PC-3 (cell line): ENCODE measurements at regions of chr10 and their contacts with region 1.

Region 1: DNA sequence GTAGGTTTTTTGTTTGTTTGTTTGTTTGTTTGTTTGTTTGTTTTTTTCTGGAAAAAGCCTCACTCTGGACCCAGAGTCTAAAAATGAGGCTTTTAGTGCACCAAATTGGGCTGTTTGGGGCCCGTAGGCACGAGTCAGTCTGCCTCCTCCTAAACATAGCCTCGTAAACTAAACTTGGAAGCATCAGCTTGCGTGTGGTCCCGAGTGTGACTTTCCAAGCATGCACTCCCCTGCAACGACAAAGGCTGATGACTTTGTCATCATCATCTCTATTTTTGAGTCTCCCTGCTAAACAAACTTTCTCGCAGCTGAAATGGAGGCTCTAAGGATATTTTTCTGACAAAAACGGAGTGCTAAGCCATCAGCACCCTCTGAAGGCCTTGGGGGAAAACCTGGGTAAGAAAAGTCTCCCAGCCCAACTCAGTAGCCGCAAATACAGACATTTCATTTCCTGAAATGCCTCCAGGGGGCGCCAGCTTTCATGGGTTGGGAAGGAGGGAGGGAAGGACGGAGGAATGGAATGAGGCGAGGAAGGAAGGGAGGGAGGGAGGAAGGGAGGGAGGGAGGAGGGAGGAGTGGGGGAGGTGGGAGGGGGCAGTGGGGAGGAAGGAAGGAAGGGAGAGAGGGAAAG is 245.9 kb downstream of the KCNMA1 start:
- DNase-seq: peak; percentile 100
- ATAC-seq: peak; percentile 25
- H3K4me3 ChIP-seq: peak overlapping the region; percentile 10; the same call in 1 of the 2 replicates
- H3K27ac ChIP-seq: peak overlapping the region; percentile 84
- H3K4me1 ChIP-seq: peaks cover 89% of the 10 kb centered on the region
- H3K27me3 ChIP-seq: no peaks in the 10 kb centered on the region
- CTCF ChIP-seq: peak; percentile 97

Region 2: GRCh38 chr10:77173615-77174461 is 217.9 kb before region 1 on chr10:
- CTCF ChIA-PET with region 1: interaction called, 30 read pairs
- POLR2A ChIA-PET with region 1: interaction called, 3 read pairs
- intact Hi-C with region 1: loop called (anchors 1 kb)
- DNase-seq: peak; percentile 100
- ATAC-seq: peak; percentile 78
- H3K4me3 ChIP-seq: no peak overlapping the region
- H3K27ac ChIP-seq: no peak overlapping the region
- H3K4me1 ChIP-seq: peaks cover 16% of the 10 kb centered on the region
- H3K27me3 ChIP-seq: no peaks in the 10 kb centered on the region
- CTCF ChIP-seq: peak; percentile 100

Region 3: DNA sequence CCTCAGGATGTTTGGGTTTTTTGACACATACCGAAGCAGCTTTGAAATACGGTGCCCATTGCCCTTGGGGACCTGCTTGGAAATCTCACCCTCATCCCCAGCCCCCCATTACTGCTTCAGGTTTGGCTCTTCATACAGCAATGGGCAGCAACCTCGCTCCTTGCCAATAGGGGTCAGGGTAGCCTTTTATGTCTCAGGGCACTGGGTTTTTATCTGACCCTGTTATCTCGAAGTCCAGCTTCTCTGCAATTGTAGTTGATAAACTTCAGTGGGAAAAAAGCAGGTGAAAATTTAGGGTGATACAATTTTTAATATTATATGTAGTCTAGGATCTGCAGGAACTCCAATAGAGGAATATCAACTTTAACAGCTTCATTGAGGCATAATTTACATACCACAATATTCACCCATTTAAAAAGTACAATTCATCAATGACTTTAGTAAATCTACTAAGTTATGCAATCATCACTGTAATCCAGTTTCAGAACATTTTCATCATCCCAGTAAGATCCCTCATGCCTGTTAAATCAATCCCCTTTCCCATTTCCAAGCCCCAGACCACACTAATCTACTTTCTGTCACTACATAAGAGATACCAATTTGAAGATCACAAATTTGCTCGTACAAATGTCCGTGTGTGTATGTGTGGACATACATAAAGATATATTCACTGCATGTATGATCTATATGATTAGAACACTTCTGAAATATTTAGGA is 140.3 kb before region 1 on chr10:
- CTCF ChIA-PET with region 1: interaction called, 12 read pairs
- POLR2A ChIA-PET with region 1: interaction called, 8 read pairs
- intact Hi-C with region 1: loop called (anchors 1 kb)
- DNase-seq: peak; percentile 92
- ATAC-seq: peak; percentile 72
- H3K4me3 ChIP-seq: no peak overlapping the region
- H3K27ac ChIP-seq: no peak overlapping the region
- H3K4me1 ChIP-seq: peaks cover 20% of the 10 kb centered on the region
- H3K27me3 ChIP-seq: no peaks in the 10 kb centered on the region
- CTCF ChIP-seq: peak; percentile 100

Region 4: GRCh38 chr10:77355844-77356243 is 35.9 kb before region 1 on chr10:
- CTCF ChIA-PET with region 1: interaction called, 31 read pairs
- POLR2A ChIA-PET with region 1: interaction called, 14 read pairs
- intact Hi-C with region 1: loop called (anchors 1 kb)
- DNase-seq: peak; percentile 100
- ATAC-seq: peak; percentile 83
- H3K4me3 ChIP-seq: no peak overlapping the region
- H3K27ac ChIP-seq: peak overlapping the region; percentile 86
- H3K4me1 ChIP-seq: peaks cover 60% of the 10 kb centered on the region
- H3K27me3 ChIP-seq: no peaks in the 10 kb centered on the region
- CTCF ChIP-seq: no peak

Region 5: DNA sequence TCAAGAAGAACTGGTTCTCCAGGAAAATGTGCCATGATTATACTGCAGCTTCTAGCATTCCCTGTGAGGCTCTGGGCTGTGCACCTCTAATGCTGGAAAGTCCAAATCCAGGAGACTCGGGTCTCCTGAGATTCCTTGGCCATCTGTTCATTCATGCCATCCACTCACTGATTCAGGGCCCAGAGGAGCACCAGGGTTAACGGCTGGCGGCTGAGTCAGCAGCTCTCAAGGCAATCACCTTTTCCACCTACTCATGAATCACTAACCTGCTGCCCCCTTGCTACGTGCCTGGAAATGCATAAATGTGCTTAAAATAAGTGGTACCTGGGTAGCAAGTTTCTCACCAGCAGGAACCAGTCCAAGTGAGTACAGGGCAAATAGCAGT is 113.1 kb after region 1 on chr10:
- CTCF ChIA-PET with region 1: interaction called, 14 read pairs
- POLR2A ChIA-PET with region 1: interaction called, 4 read pairs
- intact Hi-C with region 1: loop called (anchors 1 kb)
- DNase-seq: peak; percentile 100
- ATAC-seq: peak; percentile 48
- H3K4me3 ChIP-seq: peak overlapping the region; percentile 15; the same call in 1 of the 2 replicates
- H3K27ac ChIP-seq: peak overlapping the region; percentile 82
- H3K4me1 ChIP-seq: peaks cover 80% of the 10 kb centered on the region
- H3K27me3 ChIP-seq: no peaks in the 10 kb centered on the region
- CTCF ChIP-seq: peak; percentile 90

Region 6: GRCh38 chr10:77524281-77524711 is 132.6 kb after region 1 on chr10:
- CTCF ChIA-PET with region 1: no interaction called
- POLR2A ChIA-PET with region 1: no interaction called
- intact Hi-C with region 1: no loop called
- DNase-seq: no peak
- ATAC-seq: no peak
- H3K4me3 ChIP-seq: no peak overlapping the region
- H3K27ac ChIP-seq: no peak overlapping the region
- H3K4me1 ChIP-seq: peaks cover 9% of the 10 kb centered on the region
- H3K27me3 ChIP-seq: no peaks in the 10 kb centered on the region
- CTCF ChIP-seq: no peak

Region 7: DNA sequence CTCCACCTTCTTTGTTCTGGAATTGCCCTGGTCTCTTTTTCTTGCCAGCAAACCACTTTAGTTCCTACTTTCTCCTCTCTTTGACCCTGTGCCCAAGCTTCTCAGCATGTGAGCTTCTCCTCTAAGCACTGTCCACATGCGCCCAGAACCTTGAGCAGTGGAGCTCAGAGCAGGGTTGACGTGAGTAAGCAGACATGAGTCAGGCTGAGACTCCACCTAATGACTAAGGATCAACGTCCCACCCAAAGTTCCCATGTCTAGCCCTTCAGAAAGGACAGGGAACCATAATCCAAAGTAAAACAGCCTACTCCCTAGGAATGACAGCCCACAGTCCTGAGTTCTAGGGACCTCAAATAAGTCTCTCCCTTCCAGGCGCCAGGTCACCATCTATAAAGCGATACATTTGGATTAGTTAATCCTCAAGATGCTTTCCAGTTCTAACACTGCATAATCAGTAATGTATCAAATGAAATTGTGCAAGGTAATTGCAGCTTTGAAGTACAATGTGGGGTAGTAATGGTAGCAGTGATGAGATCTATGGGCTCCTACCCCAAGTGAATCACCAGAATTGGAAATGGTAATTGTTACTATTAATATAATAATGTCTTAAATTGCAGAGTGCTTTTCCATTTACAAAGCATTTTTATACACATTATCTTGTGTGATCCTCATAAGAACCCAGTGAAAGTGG is 201.4 kb after region 1 on chr10:
- CTCF ChIA-PET with region 1: no interaction called
- POLR2A ChIA-PET with region 1: no interaction called
- intact Hi-C with region 1: loop called (anchors 5 kb)
- DNase-seq: peak; percentile 100
- ATAC-seq: peak; percentile 99
- H3K4me3 ChIP-seq: no peak overlapping the region
- H3K27ac ChIP-seq: peak overlapping the region; percentile 74
- H3K4me1 ChIP-seq: peaks cover 41% of the 10 kb centered on the region
- H3K27me3 ChIP-seq: no peaks in the 10 kb centered on the region
- CTCF ChIP-seq: no peak